Tibial artery (tissue), 4 donors: ENCODE measurements at regions of chr3 and their contacts with region 1.

Region 1: GRCh38 chr3:108090701-108091451 is at the start of gene CD47:
- DNase-seq: peak; percentile 91 to 96
- H3K4me3 ChIP-seq: peak within 1 kb of the TSS; percentile 84 to 86
- H3K27ac ChIP-seq: peak within 1 kb of the TSS; percentile 82 to 92
- H3K4me1 ChIP-seq: peaks cover 0 to 17% (median 0%) of the 10 kb centered on the region in 4 donors
- H3K27me3 ChIP-seq: no peaks in the 10 kb centered on the region
- CTCF ChIP-seq: no peak

Region 2: GRCh38 chr3:107235928-107236315 is 855.0 kb before region 1 on chr3:
- intact Hi-C with region 1: loop called (anchors 10 kb)
- DNase-seq: no peak
- H3K4me3 ChIP-seq: peak overlapping the region; percentile 50 to 52
- H3K27ac ChIP-seq: peak overlapping the region; percentile 60
- H3K4me1 ChIP-seq: peaks cover 3 to 27% (median 6%) of the 10 kb centered on the region in 4 donors
- H3K27me3 ChIP-seq: no peaks in the 10 kb centered on the region
- CTCF ChIP-seq: peak; percentile 86 to 95

Region 3: DNA sequence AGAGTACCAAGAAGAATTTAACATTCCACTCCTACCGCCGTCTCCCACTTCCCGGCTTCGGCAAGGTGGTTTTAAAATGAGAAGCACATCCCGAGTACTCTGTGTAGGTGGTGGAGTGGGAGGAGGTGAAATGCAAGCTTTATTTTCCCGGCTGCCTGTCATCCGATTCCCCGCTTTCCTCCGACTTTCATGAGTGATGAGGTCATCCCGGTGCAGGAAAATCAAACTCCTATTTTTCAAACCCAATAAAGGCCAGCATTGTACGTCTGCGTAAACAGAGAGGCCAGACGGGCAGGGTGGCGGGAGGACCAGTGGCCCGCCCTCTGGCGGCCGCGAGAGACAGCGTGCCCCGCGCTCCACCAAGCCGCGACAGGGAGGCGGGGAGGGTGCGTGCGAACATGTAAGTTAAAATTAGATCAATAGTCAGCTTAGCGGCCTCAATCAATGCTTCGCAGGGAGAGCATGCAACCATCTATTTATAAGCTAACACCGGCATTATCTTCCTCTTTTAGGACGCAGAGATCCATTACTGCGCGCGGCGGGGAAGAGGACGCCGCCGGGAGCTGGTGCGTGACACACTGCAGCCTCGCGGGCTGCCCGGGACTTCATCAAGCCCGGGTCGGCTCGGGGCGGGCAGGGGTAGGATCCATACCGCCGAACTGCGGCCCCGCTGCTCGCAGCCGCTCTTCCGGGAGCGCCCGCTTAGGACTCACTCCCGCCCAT is 163.4 kb before region 1 on chr3:
- intact Hi-C with region 1: loop called (anchors 10 kb)
- DNase-seq: peak; percentile 53 to 77
- H3K4me3 ChIP-seq: peak overlapping the region; percentile 56 to 58
- H3K27ac ChIP-seq: peak overlapping the region; percentile 37 to 43
- H3K4me1 ChIP-seq: peaks cover 0 to 13% (median 5%) of the 10 kb centered on the region in 4 donors
- H3K27me3 ChIP-seq: no peaks in the 10 kb centered on the region
- CTCF ChIP-seq: peak; percentile 85 to 87

Region 4: DNA sequence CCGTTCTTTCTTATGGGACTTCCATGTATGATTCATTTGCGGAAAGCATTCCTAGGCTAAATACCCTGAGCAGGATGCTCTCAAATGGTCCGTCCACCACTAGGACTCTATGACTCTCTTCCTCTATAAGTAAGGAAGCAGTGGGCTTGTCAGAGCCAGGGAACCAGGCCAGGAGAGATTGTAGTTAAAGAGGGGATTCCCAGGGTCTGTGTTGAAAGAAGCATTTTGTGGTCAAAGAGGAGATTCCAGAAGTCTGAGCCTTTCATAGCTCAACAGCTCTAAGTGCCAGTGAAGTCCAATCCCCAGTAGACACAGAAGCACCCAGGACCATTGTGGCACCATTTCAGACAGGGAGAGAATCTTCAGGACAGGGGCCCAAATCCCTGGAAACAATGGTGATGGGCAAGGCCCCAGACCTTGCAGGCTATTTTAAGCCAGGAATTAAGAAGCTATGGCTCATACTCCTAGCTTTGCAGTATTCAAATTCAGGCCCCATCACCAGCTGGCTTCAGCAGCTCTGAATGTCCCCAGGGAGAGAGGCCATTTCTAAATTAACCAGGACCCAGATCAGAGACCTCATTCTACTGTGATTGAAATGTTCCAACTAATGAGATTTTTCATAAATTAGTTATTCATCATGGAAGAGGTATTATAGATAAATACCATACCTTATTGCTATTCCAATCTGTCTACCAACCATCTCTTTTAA is 81.8 kb before region 1 on chr3:
- intact Hi-C with region 1: no loop called
- DNase-seq: no peak
- H3K4me3 ChIP-seq: no peak overlapping the region
- H3K27ac ChIP-seq: no peak overlapping the region
- H3K4me1 ChIP-seq: peaks cover 0 to 27% (median 18%) of the 10 kb centered on the region in 4 donors
- H3K27me3 ChIP-seq: no peaks in the 10 kb centered on the region
- CTCF ChIP-seq: no peak

Region 5: DNA sequence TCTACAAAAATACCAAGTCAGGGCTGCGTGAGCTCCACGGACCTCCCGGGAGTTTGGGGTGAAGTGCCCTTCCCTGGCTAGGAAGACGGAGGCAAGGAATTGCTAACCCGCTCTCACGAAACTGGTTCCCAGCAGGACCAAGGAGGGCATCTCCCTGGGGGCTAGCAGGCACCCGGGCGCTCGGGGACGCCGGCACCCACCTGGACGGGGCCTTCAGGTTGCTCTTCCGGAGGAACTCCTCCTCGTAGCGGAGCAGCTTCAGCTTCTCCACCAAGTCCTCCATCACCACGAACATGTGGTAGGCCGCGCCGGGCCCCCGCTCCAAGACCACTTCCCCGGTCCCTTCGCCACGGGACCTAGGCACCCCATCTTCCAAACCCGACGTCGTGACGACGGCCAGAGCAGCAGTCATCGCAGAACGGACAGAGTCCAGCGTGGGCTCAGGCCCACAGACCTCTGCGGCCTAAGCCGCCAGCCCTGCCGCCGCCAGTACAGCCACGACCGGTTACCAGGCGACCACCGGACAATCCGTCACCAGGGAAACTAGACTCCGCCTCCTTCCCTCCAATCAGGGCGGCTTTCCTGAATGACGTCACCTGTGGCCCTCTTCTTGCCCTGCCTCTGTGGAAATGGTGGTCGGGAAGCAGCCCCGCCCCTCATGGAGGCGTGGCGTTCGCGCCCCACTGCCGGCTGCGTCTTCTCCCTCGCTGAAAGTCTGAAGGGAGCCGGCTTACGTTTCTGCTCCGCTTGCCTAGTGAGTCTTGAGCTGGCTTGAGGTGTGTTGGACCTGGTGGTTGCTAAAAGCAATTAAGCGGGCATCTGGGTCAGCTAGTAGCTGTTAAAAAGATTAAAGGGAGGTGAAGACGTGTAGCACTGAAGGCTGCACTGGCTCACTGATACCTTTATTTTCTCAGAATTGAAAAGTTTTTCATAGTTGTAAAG is 131.3 kb after region 1 on chr3 and contains the start of gene IFT57:
- intact Hi-C with region 1: loop called (anchors 2 kb)
- DNase-seq: peak; percentile 98 to 99
- H3K4me3 ChIP-seq: peak within 1 kb of the TSS; percentile 73 to 92
- H3K27ac ChIP-seq: peak within 1 kb of the TSS; percentile 83 to 88
- H3K4me1 ChIP-seq: peaks cover 0 to 44% (median 14%) of the 10 kb centered on the region in 4 donors
- H3K27me3 ChIP-seq: no peaks in the 10 kb centered on the region
- CTCF ChIP-seq: no peak